CD14-positive monocyte (primary cell): ENCODE measurements at regions of chr17 and their contacts with region 1.

Region 1: GRCh38 chr17:7881276-7882054 is 7.1 kb upstream of the CHD3 start:
- DNase-seq: peak in 2 of 3 donors; percentile 15 to 36
- H3K4me3 ChIP-seq: peak overlapping the region in 1 of 3 experiments; percentile 37
- H3K4me3 Mint-ChIP-seq: no peak overlapping the region
- H3K27ac ChIP-seq: peak overlapping the region; percentile 15 to 34
- H3K27ac Mint-ChIP-seq: no peak overlapping the region
- H3K4me1 ChIP-seq: peaks cover 48 to 62% of the 10 kb centered on the region in 2 donors
- H3K4me1 Mint-ChIP-seq: peaks cover 11% of the 10 kb centered on the region
- H3K27me3 ChIP-seq: no peaks in the 10 kb centered on the region
- H3K27me3 Mint-ChIP-seq: no peaks in the 10 kb centered on the region
- CTCF ChIP-seq: no peak

Region 2: DNA sequence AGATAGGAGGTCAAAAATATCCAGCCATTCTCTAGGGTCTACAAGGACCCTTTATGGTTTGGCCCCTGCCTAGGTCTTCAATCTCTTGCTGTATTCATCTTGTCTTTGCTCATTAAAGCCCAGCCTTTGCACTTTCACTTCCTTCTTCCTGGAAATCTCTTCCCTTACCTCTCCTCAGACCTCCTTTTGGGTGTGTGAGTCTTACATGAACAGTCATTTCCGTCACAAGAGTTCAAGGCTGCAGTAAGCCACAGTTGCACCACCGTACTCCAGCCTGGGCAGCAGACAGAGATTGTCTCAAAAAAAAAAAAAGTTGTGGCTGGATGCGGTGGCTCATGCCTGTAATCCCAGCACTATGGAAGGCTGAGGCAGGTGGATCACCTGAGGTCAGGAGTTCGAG is 236.7 kb before region 1 on chr17:
- intact Hi-C with region 1: no loop called
- DNase-seq: peak; percentile 87 to 94 (median 92)
- H3K4me3 ChIP-seq: peak overlapping the region in 1 of 3 experiments; percentile 3
- H3K4me3 Mint-ChIP-seq: peak overlapping the region in 1 of 2 donors; percentile 23
- H3K27ac ChIP-seq: peak overlapping the region; percentile 48 to 65
- H3K27ac Mint-ChIP-seq: peak overlapping the region; percentile 86 to 95 (median 93)
- H3K4me1 ChIP-seq: peaks cover 37 to 46% of the 10 kb centered on the region in 2 donors
- H3K4me1 Mint-ChIP-seq: peaks cover 48% of the 10 kb centered on the region
- H3K27me3 ChIP-seq: peaks cover 0 to 1% of the 10 kb centered on the region in 2 donors
- H3K27me3 Mint-ChIP-seq: peaks cover 6 to 16% (median 9%) of the 10 kb centered on the region in 3 donors
- CTCF ChIP-seq: no peak

Region 3: GRCh38 chr17:7867881-7868329 is 13.6 kb before region 1 on chr17:
- intact Hi-C with region 1: loop called in 1 of 2 experiments (anchors 2 kb)
- DNase-seq: peak in 1 of 3 donors; percentile 62
- H3K4me3 ChIP-seq: peak overlapping the region in 1 of 3 experiments; percentile 58
- H3K4me3 Mint-ChIP-seq: peak overlapping the region; percentile 47 to 86
- H3K27ac ChIP-seq: peak overlapping the region; percentile 19 to 74
- H3K27ac Mint-ChIP-seq: peak overlapping the region; percentile 70 to 92 (median 85)
- H3K4me1 ChIP-seq: peaks cover 47 to 61% of the 10 kb centered on the region in 2 donors
- H3K4me1 Mint-ChIP-seq: peaks cover 51% of the 10 kb centered on the region
- H3K27me3 ChIP-seq: no peaks in the 10 kb centered on the region
- H3K27me3 Mint-ChIP-seq: no peaks in the 10 kb centered on the region
- CTCF ChIP-seq: no peak

Region 4: GRCh38 chr17:8126531-8127066 is 245.1 kb after region 1 on chr17:
- intact Hi-C with region 1: no loop called
- DNase-seq: peak in 1 of 3 donors; percentile 22
- H3K4me3 ChIP-seq: peak overlapping the region; percentile 40 to 77 (median 47)
- H3K4me3 Mint-ChIP-seq: peak overlapping the region; percentile 86 to 97
- H3K27ac ChIP-seq: no peak overlapping the region
- H3K27ac Mint-ChIP-seq: peak overlapping the region in 3 of 7 donors; percentile 26 to 52 (median 38)
- H3K4me1 ChIP-seq: peaks cover 54 to 58% of the 10 kb centered on the region in 2 donors
- H3K4me1 Mint-ChIP-seq: peaks cover 52% of the 10 kb centered on the region
- H3K27me3 ChIP-seq: peaks cover 47 to 77% of the 10 kb centered on the region in 2 donors
- H3K27me3 Mint-ChIP-seq: peaks cover 81 to 90% (median 85%) of the 10 kb centered on the region in 3 donors
- CTCF ChIP-seq: no peak